Left colon (tissue), 2 donors: ENCODE measurements at regions of chr7 and their contacts with region 1.

Region 1: DNA sequence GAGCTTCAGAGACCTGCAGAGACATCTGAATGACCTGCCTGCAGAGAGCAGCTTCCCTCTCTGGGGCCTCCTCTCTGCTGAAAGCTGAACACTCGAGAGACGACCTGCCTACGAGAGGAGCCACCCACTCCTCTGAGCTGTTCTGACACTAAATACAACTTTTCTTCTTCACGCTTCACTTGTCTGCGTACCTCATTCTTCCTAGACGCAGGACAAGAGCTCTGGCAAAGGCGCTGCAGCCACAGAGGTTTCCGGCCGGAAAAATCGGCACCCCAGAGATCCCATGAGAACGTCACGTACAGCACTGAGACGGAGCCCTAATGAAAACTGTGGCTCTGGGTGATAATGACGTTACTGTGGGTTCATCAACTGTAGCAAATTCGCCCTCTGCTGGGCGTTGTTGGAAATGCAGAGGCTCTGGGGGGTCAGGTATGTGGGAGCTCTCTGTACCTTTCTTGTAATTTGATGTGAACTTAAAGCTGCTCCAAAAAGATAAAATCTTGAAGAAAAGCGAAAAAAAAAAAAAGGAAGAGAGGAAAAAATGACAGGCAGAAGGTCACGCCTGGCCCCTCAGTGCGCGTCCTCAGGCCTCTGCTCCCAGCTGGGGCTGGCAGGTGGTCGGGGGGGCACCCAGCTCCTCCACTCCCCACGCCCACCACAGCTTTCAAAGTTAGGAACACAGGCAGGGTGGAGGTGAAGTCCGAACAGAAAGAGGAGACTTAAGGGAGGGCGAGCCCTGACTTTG is 120.7 kb downstream of the DYNC2I1 start:
- DNase-seq: peak; percentile 71 to 93
- ATAC-seq: peak; percentile 82

Region 2: DNA sequence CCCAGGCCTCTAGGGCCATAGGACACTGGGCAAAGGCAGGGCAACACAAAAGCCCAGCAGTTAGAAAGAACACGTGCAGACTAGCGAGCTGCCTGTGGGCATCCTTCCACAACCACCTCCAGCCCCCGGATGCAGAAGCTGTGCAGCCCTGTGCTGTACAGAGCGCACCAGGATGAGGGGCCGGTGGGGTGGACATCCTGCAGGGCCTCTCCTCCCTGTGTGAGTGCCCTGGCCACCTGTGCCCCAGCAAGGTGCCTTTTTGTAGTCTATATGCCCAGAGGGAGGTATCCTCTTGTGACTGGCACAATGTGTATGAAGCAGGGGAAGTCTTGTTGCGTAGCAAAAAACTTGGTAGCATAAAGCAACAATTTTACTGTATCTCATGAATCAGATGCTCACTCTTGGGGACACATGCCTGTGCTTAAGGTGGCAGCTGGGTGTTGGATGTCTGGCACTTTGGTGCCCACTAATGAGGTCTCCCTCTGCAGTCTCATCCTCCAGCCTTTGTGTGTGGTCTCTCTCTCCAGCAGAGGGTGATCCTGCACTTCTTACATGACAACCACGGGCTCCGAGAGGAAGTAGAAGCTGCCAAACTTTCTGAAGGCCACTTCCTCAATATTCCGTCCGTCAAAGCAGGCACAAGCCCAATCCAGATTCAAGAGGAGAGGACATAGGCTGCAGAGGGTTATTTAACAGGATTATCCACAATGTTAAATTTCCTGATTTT is 281.1 kb before region 1 on chr7:
- intact Hi-C with region 1: loop called (anchors 2 to 10 kb)
- DNase-seq: peak; percentile 51 to 78
- ATAC-seq: peak; percentile 100

Region 3: DNA sequence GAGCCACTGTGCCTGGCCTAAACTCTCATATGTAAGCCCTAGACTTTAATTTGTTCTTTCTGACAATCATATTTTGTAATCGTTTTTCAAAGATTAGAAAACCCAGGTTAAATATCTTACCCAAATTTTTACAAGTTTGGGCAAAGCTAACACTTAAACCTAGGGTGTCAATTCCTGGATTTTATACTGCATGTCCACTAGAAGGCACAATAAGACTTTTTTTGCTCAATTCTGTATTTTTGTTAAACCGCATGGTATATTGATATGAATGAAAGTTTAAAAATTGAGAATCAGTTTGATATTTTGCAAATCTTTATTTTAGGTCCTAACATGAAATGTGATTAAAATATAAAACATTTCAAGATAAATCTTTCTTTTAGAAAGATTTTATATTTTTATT is 91.4 kb before region 1 on chr7:
- intact Hi-C with region 1: loop called in 1 of 2 experiments (anchors 10 kb)
- DNase-seq: no peak
- ATAC-seq: no peak